ENCODE measurements at regions of chr1 and their contacts with region 1.

Region 1: DNA sequence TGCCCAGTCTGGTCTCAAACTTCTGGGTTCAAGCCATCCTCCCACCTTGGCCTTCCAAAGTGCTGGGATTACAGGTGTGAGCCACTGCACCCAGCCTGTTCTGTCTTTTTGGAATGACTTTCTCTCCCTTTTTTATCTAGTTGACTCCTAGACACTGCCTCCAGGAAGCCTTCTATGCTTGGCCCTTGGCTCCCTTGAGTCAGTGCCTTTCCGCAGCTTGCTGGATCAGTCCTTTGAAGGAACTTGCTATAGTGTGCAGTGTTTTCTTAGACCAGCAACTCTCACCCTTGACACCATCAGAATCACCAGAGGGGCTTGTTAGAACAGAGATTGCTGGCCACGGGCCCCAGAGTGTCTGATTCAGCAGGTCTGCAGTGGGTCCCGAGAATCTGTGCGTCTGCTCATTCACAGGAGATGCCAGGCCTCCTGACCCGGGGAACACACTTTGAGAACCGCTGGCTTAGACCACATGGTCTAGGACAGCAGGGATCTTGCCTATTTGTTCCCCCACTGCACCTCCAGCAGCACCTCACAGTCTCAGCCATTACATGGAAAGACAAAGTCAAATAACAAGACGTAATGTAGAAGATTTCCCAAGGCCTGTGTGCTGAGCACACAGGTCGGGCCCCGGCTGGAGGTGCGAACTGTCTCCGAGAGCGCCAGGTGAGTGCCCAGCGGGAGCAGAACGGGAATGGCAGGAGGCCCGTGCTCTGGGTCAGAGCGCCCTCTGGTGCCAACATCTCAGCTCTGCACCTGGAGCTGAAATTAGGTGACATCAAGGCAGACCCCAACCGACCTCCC is 27.4 kb upstream of the CTPS1 start:
- DNase-seq: peak; percentile 56
- H3K4me3 ChIP-seq: no peak overlapping the region
- H3K27ac ChIP-seq: no peak overlapping the region
- H3K4me1 ChIP-seq: peaks cover 6% of the 10 kb centered on the region
- H3K27me3 ChIP-seq: peaks cover 2 to 14% of the 10 kb centered on the region in 2 experiments
- CTCF ChIP-seq: peak; percentile 93 to 97
- POLR2A ChIP-seq: no peak

Region 2: GRCh38 chr1:40583980-40584379 is 368.2 kb before region 1 on chr1:
- CTCF ChIA-PET with region 1: no interaction called
- POLR2A ChIA-PET with region 1: no interaction called
- dilution Hi-C with region 1: no loop called
- intact Hi-C with region 1: no loop called
- DNase-seq: no peak
- H3K4me3 ChIP-seq: no peak overlapping the region
- H3K27ac ChIP-seq: no peak overlapping the region
- H3K4me1 ChIP-seq: no peaks in the 10 kb centered on the region
- H3K27me3 ChIP-seq: peaks cover 3 to 4% of the 10 kb centered on the region in 2 experiments
- CTCF ChIP-seq: no peak
- POLR2A ChIP-seq: no peak

Region 3: GRCh38 chr1:40612345-40612831 is 339.8 kb before region 1 on chr1:
- CTCF ChIA-PET with region 1: interaction called, 4 read pairs
- POLR2A ChIA-PET with region 1: no interaction called
- dilution Hi-C with region 1: no loop called
- intact Hi-C with region 1: loop called (anchors 1 kb)
- DNase-seq: peak; percentile 71
- H3K4me3 ChIP-seq: no peak overlapping the region
- H3K27ac ChIP-seq: no peak overlapping the region
- H3K4me1 ChIP-seq: no peaks in the 10 kb centered on the region
- H3K27me3 ChIP-seq: peaks cover 1 to 11% of the 10 kb centered on the region in 2 experiments
- CTCF ChIP-seq: peak; percentile 75 to 81
- POLR2A ChIP-seq: no peak

Region 4: GRCh38 chr1:40774266-40774998 is 177.7 kb before region 1 on chr1:
- CTCF ChIA-PET with region 1: interaction called, 235 read pairs
- POLR2A ChIA-PET with region 1: interaction called, 4 read pairs
- dilution Hi-C with region 1: no loop called
- intact Hi-C with region 1: loop called (anchors 1 kb)
- DNase-seq: peak; percentile 37
- H3K4me3 ChIP-seq: no peak overlapping the region
- H3K27ac ChIP-seq: no peak overlapping the region
- H3K4me1 ChIP-seq: no peaks in the 10 kb centered on the region
- H3K27me3 ChIP-seq: no peaks in the 10 kb centered on the region
- CTCF ChIP-seq: peak; percentile 72 to 85
- POLR2A ChIP-seq: no peak

Region 5: GRCh38 chr1:40849801-40850592 is 102.1 kb before region 1 on chr1:
- CTCF ChIA-PET with region 1: interaction called, 898 read pairs
- POLR2A ChIA-PET with region 1: no interaction called
- dilution Hi-C with region 1: no loop called
- intact Hi-C with region 1: loop called (anchors 1 kb)
- DNase-seq: peak; percentile 60
- H3K4me3 ChIP-seq: no peak overlapping the region
- H3K27ac ChIP-seq: no peak overlapping the region
- H3K4me1 ChIP-seq: peaks cover 3% of the 10 kb centered on the region
- H3K27me3 ChIP-seq: peaks cover 14 to 17% of the 10 kb centered on the region in 2 experiments
- CTCF ChIP-seq: peak; percentile 80 to 86
- POLR2A ChIP-seq: no peak

Region 6: GRCh38 chr1:40877698-40878097 is 74.4 kb before region 1 on chr1:
- CTCF ChIA-PET with region 1: interaction called, 84 read pairs
- POLR2A ChIA-PET with region 1: interaction called, 6 read pairs
- dilution Hi-C with region 1: no loop called
- intact Hi-C with region 1: loop called (anchors 1 kb)
- DNase-seq: peak; percentile 94
- H3K4me3 ChIP-seq: no peak overlapping the region
- H3K27ac ChIP-seq: peak overlapping the region; percentile 98
- H3K4me1 ChIP-seq: peaks cover 42% of the 10 kb centered on the region
- H3K27me3 ChIP-seq: no peaks in the 10 kb centered on the region
- CTCF ChIP-seq: no peak
- POLR2A ChIP-seq: no peak

Region 7: DNA sequence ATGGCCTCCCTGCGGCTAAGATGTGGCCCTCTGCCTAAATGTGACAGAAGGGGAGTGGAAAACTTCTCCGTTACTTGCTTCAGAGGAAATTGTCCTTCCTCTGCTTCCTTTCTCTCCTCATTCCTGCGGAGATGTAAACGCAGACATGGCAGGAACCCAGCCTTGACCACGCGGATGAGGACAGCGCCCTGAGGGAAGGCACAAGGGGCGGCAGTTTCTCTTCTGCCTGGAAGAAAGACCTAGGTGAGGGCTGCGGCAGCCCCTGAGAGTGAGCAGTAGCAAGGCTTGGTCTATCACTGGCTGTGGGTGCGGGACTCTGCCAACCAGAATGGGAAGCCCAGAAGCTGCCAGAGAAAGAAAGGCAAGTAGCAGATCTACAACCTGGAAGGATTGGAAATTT is 13.4 kb after region 1 on chr1:
- CTCF ChIA-PET with region 1: interaction called, 11 read pairs
- POLR2A ChIA-PET with region 1: interaction called, 7 read pairs
- dilution Hi-C with region 1: no loop called
- intact Hi-C with region 1: no loop called
- DNase-seq: no peak
- H3K4me3 ChIP-seq: no peak overlapping the region
- H3K27ac ChIP-seq: no peak overlapping the region
- H3K4me1 ChIP-seq: peaks cover 11% of the 10 kb centered on the region
- H3K27me3 ChIP-seq: no peaks in the 10 kb centered on the region
- CTCF ChIP-seq: no peak
- POLR2A ChIP-seq: no peak

Region 8: DNA sequence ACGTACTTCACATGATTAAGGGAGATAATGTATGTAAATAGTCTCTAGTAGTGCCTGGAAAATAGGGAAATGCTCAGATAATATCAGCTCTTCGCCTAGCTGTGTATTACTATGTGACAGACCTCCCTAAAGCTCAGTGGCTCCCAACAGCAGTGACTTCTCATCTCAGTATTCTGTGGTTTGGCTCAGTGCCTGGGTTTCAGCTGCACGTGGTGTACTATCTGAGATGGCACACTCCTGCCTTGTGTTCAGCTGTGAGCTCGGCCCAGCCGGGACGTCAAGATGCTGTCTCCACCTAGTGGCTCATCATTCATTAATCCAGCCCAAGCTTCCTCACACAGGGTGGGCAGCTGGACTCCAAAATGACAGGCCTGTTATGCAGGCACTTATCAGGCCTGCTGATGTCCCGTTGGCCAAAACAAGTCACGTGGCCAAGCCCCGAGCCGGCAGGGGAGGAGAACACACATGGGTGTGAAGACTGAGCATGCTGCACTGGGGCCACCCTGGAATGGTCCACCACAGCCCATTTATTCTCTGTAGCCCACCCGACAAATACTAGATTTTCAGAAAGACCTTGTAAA is 51.6 kb after region 1 on chr1:
- CTCF ChIA-PET with region 1: interaction called, 22 read pairs
- POLR2A ChIA-PET with region 1: no interaction called
- dilution Hi-C with region 1: no loop called
- intact Hi-C with region 1: no loop called
- DNase-seq: peak; percentile 95
- H3K4me3 ChIP-seq: no peak overlapping the region
- H3K27ac ChIP-seq: peak overlapping the region; percentile 44
- H3K4me1 ChIP-seq: peaks cover 10% of the 10 kb centered on the region
- H3K27me3 ChIP-seq: no peaks in the 10 kb centered on the region
- CTCF ChIP-seq: peak; percentile 60 to 67
- POLR2A ChIP-seq: no peak

Measured in endothelial cell of umbilical vein (primary cell).